ENCODE measurements at regions of chr14 and their contacts with region 1.

Region 1: GRCh38 chr14:20327005-20327869 is 5.8 kb downstream of the CCNB1IP1 start:
- DNase-seq: peak in 7 of 9 donors; percentile 44 to 74 (median 66)
- ATAC-seq: peak; percentile 81
- H3K4me3 ChIP-seq: no peak overlapping the region
- H3K4me3 Mint-ChIP-seq: peak overlapping the region in 5 of 10 donors; percentile 2 to 52 (median 26)
- H3K27ac ChIP-seq: no peak overlapping the region
- H3K27ac Mint-ChIP-seq: peak overlapping the region; percentile 35 to 93 (median 66)
- H3K4me1 ChIP-seq: peaks cover 0 to 4% of the 10 kb centered on the region in 2 donors
- H3K4me1 Mint-ChIP-seq: peaks cover 9 to 42% (median 27%) of the 10 kb centered on the region in 7 donors
- H3K27me3 ChIP-seq: no peaks in the 10 kb centered on the region
- H3K27me3 Mint-ChIP-seq: no peaks in the 10 kb centered on the region

Region 2: GRCh38 chr14:20350860-20351259 is 23.6 kb after region 1 on chr14:
- CTCF ChIA-PET with region 1: interaction called, 14 read pairs
- POLR2A ChIA-PET with region 1: no interaction called
- intact Hi-C with region 1: loop called in 1 of 2 experiments (anchors 1 kb)
- DNase-seq: no peak
- ATAC-seq: no peak
- H3K4me3 ChIP-seq: no peak overlapping the region
- H3K4me3 Mint-ChIP-seq: no peak overlapping the region
- H3K27ac ChIP-seq: no peak overlapping the region
- H3K27ac Mint-ChIP-seq: no peak overlapping the region
- H3K4me1 ChIP-seq: no peaks in the 10 kb centered on the region
- H3K4me1 Mint-ChIP-seq: peaks cover 0 to 5% (median under 1%) of the 10 kb centered on the region in 7 donors
- H3K27me3 ChIP-seq: no peaks in the 10 kb centered on the region
- H3K27me3 Mint-ChIP-seq: no peaks in the 10 kb centered on the region

Region 3: GRCh38 chr14:20662968-20663732 is 335.9 kb after region 1 on chr14:
- CTCF ChIA-PET with region 1: no interaction called
- POLR2A ChIA-PET with region 1: interaction called, 3 read pairs
- intact Hi-C with region 1: loop called in 1 of 2 experiments (anchors 1 kb)
- DNase-seq: peak; percentile 49 to 77 (median 66)
- ATAC-seq: peak; percentile 91
- H3K4me3 ChIP-seq: peak overlapping the region; percentile 59
- H3K4me3 Mint-ChIP-seq: peak overlapping the region; percentile 72 to 86 (median 79)
- H3K27ac ChIP-seq: no peak overlapping the region
- H3K27ac Mint-ChIP-seq: peak overlapping the region in 8 of 9 donors; percentile 18 to 74 (median 39)
- H3K4me1 ChIP-seq: peaks cover 3 to 17% of the 10 kb centered on the region in 2 donors
- H3K4me1 Mint-ChIP-seq: peaks cover 23 to 53% (median 25%) of the 10 kb centered on the region in 7 donors
- H3K27me3 ChIP-seq: no peaks in the 10 kb centered on the region
- H3K27me3 Mint-ChIP-seq: peaks cover 5 to 23% (median 19%) of the 10 kb centered on the region in 5 donors

Measured in naive thymus-derived CD4-positive, alpha-beta T cell (primary cell).